ENCODE measurements at regions of chr14 and their contacts with region 1.

Region 1: DNA sequence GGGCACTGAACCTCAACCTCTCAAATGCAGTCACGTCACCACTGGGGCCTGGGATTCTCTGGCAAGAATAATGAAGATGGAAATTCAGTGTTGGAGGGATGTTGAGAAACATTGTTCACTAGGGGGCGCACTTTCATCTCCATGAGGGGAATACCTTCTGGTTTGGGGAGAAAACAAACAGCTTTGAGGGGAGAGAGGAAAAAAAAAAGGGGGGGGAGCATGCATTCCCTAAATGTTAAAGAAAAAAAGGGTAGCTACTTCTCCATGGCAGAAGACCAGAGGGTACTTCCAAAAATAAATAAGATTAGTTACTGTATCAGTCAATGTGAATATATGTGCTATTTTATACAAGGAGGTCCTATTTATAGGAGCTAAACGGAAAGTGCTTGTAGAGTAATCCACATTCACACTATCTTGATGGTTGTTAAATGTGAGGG is 5.8 kb upstream of the TBPL2 start:
- DNase-seq: peak; percentile 89
- H3K4me3 Mint-ChIP-seq: no peak overlapping the region
- H3K27ac Mint-ChIP-seq: no peak overlapping the region
- H3K4me1 Mint-ChIP-seq: peaks cover 31% of the 10 kb centered on the region
- H3K27me3 Mint-ChIP-seq: no peaks in the 10 kb centered on the region
- CTCF ChIP-seq: peak; percentile 65

Region 2: DNA sequence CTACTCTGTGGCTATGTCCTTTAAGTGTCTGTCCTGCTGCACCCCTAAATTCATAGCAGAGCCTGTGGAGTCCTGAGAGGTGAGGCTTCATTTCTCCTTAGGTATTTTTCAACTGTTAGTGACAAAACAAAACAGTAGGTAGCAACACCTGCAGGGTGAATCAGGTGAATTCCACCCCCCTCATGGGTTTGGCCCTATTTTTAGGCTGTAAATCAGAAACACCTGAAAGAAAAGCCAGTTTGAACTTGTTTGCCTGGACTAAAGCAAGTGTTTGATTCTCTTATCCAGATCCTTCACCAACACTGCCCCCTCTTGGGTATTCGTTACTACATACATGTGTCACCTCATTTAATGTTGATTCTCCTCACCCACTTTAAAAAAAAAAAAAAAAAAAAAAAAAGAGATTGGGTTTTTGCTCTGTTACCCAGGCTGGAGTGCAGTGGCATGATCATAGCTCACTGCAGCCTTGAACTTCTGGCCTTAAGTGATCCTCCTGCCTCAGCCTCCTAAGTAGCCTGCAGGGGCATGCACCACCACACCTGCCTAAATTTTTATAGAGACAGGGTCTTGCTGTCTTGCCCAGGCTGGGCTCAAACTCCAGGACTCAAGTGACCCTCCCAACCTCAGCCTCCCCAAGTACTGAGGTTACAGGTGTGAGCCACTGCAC is 16.1 kb before region 1 on chr14:
- CTCF ChIA-PET with region 1: interaction called, 14 read pairs
- POLR2A ChIA-PET with region 1: interaction called, 5 read pairs
- intact Hi-C with region 1: no loop called
- DNase-seq: peak; percentile 87
- H3K4me3 Mint-ChIP-seq: no peak overlapping the region
- H3K27ac Mint-ChIP-seq: peak overlapping the region; percentile 46
- H3K4me1 Mint-ChIP-seq: peaks cover 16% of the 10 kb centered on the region
- H3K27me3 Mint-ChIP-seq: no peaks in the 10 kb centered on the region
- CTCF ChIP-seq: peak; percentile 42

Region 3: DNA sequence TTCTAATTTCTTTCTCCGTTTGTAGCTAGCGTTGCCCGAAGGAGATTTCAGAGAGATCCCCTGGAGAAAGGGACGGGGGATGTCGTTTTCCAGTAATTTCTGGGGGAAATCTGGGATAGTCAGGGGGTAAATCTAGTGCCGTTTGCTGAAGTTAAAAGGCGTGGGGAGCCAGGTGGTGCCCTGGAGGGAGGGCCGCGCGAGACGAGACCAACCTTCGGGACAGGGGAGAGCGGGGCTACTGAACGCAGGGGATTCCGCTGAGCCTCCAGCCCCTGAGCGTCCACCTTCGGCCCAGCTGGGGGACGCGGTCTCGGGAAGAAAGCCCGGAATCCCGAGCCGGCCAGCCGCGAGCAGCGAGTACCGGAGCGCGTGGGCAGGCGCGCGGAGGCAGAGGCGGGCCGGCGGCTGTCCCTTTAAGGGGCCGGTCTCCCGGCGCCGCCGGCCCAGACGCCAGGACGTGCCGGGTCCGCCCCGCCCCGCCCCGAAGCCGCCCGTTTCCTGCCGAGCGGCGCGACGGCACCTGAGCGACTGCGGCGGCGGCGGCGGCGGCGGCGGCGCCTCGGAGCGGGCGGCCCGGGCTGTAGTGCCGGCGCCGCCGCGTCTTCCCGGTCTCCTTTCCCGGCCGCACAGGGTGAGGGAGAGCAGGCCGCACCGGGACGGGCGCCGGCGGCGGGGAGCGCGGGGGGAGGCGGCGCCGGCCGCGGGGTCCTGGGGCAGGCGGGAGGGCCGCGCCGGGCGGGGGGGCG is 133.7 kb after region 1 on chr14 and contains the start of gene KTN1:
- CTCF ChIA-PET with region 1: interaction called, 24 read pairs
- POLR2A ChIA-PET with region 1: interaction called, 10 read pairs
- intact Hi-C with region 1: loop called (anchors 2 kb)
- DNase-seq: peak; percentile 85
- H3K4me3 Mint-ChIP-seq: peak within 1 kb of the TSS; percentile 70
- H3K27ac Mint-ChIP-seq: peak within 1 kb of the TSS; percentile 70
- H3K4me1 Mint-ChIP-seq: peaks cover 11% of the 10 kb centered on the region
- H3K27me3 Mint-ChIP-seq: no peaks in the 10 kb centered on the region
- CTCF ChIP-seq: no peak
- total RNA-seq, gene KTN1: 165 and 180 TPM in 2 replicates

Region 4: GRCh38 chr14:55599200-55599879 is 153.1 kb after region 1 on chr14:
- CTCF ChIA-PET with region 1: interaction called, 15 read pairs
- POLR2A ChIA-PET with region 1: no interaction called
- intact Hi-C with region 1: no loop called
- DNase-seq: peak; percentile 90
- H3K4me3 Mint-ChIP-seq: peak overlapping the region; percentile 68
- H3K27ac Mint-ChIP-seq: peak overlapping the region; percentile 93
- H3K4me1 Mint-ChIP-seq: peaks cover 17% of the 10 kb centered on the region
- H3K27me3 Mint-ChIP-seq: no peaks in the 10 kb centered on the region
- CTCF ChIP-seq: no peak

Region 5: DNA sequence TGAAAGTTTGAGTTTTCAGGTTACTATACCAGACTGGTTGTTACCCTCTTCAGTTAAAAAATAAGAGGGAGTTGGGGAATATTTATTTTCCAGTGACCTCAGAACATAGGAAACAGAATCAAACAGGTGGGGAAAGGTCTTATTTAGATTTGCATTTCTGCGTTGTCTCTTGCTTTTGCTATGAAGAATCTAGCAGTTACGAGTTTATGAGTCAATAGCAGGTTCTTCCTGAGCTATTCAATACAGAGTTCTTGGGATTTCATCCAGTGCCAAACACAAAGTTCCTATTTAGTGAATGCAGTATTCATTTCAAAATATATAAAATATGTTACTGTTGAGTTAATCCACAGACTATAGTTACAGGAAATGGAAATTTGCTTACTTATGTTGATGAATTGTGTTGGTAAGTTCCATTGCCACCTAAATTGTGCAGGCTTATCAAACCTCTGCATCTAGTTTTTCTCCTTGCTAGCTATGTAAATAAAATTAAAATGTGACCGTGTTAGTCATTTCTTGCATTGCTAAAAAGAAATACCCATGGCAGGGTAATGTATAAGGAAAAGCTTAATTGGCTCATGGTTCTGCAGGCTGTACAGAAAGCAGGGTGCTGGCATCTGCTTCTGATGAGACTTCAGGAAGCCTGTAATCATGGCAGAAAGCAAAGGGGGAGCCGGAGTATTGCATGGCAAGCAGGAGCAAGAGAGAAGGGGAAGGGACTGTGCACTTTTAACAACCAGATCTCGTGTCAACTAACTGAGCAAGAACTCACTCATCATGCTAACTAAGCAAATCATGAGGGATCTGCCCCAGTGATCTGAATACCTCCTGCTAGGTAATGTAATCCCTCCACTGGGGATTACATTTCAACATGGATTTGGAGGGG is 244.0 kb after region 1 on chr14:
- CTCF ChIA-PET with region 1: interaction called, 3 read pairs
- POLR2A ChIA-PET with region 1: interaction called, 3 read pairs
- intact Hi-C with region 1: loop called (anchors 5 kb)
- DNase-seq: no peak
- H3K4me3 Mint-ChIP-seq: no peak overlapping the region
- H3K27ac Mint-ChIP-seq: no peak overlapping the region
- H3K4me1 Mint-ChIP-seq: no peaks in the 10 kb centered on the region
- H3K27me3 Mint-ChIP-seq: no peaks in the 10 kb centered on the region
- CTCF ChIP-seq: no peak

Region 6: GRCh38 chr14:56422703-56423213 is 976.5 kb after region 1 on chr14:
- CTCF ChIA-PET with region 1: no interaction called
- POLR2A ChIA-PET with region 1: no interaction called
- intact Hi-C with region 1: loop called (anchors 2 kb)
- DNase-seq: peak; percentile 77
- H3K4me3 Mint-ChIP-seq: no peak overlapping the region
- H3K27ac Mint-ChIP-seq: no peak overlapping the region
- H3K4me1 Mint-ChIP-seq: no peaks in the 10 kb centered on the region
- H3K27me3 Mint-ChIP-seq: no peaks in the 10 kb centered on the region
- CTCF ChIP-seq: peak; percentile 58